ENCODE measurements at regions of chr7 and their contacts with region 1.

Region 1: GRCh38 chr7:45111298-45112223 is at the start of gene TBRG4:
- DNase-seq: peak; percentile 90 to 96 (median 92)
- H3K4me3 ChIP-seq: peak within 1 kb of the TSS; percentile 83
- H3K27ac ChIP-seq: peak within 1 kb of the TSS; percentile 63 to 90
- H3K4me1 ChIP-seq: peaks cover 6% of the 10 kb centered on the region
- H3K27me3 ChIP-seq: no peaks in the 10 kb centered on the region
- CTCF ChIP-seq: peak in 1 of 3 donors; percentile 39
- EP300 ChIP-seq: no peak
- POLR2A ChIP-seq: peak; percentile 98
- total RNA-seq, gene TBRG4: 28.9 to 67.5 (median 50.8) TPM

Region 2: DNA sequence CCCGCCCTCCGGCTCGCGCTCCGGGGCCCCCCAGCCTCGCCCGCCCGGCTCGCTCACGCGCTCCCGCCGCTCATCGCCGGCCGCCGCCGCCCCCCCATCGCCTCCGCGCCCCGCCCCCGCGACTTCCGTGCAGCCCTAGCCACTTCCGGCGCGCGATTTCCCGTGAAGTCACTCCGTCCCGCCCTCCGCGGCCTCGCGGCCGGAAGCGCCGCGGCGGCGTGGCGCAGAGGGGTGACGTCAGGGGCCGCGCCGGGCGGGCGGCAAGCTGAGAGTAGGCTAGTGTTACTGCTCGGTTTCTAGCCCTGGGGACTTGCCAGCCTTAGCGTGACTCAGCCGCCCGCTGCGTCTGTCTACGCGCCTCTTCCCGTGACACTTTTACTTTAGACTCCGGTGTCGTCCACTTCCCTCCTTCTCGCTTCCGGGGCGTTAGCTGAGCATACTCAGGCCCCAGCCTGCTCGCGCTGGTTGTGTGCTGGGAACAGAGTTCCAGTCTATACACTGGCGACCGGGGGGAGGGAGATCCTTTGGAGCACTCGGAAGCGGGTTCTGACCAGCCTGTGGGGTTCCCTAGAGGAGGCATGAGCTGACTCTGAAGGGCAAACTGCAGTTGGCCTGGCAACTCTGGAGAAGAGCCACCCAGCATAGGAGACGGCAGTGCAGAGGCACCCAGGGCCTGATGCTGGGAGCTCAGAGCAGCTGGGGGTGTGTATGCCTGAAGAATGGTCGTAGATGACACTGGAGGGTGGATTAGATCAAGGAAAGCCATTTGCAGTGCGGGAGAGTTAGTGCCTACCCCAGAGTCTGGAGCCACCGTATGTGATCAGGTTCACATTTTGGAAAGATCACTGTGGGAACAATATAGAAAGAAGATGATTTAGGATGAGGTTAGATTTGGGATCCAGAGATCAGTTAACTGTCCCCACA is 225.9 kb before region 1 on chr7 and contains the start of gene PURB:
- intact Hi-C with region 1: loop called in 1 of 4 experiments (anchors 10 kb)
- DNase-seq: peak; percentile 93 to 96 (median 95)
- H3K4me3 ChIP-seq: peak within 1 kb of the TSS; percentile 89
- H3K27ac ChIP-seq: peak within 1 kb of the TSS; percentile 74 to 97
- H3K4me1 ChIP-seq: peaks cover 14% of the 10 kb centered on the region
- H3K27me3 ChIP-seq: no peaks in the 10 kb centered on the region
- CTCF ChIP-seq: peak in 1 of 3 donors; percentile 36
- EP300 ChIP-seq: peak; percentile 8
- POLR2A ChIP-seq: peak; percentile 97
- total RNA-seq, gene PURB: 17.6 to 27.3 (median 25.6) TPM

Region 3: DNA sequence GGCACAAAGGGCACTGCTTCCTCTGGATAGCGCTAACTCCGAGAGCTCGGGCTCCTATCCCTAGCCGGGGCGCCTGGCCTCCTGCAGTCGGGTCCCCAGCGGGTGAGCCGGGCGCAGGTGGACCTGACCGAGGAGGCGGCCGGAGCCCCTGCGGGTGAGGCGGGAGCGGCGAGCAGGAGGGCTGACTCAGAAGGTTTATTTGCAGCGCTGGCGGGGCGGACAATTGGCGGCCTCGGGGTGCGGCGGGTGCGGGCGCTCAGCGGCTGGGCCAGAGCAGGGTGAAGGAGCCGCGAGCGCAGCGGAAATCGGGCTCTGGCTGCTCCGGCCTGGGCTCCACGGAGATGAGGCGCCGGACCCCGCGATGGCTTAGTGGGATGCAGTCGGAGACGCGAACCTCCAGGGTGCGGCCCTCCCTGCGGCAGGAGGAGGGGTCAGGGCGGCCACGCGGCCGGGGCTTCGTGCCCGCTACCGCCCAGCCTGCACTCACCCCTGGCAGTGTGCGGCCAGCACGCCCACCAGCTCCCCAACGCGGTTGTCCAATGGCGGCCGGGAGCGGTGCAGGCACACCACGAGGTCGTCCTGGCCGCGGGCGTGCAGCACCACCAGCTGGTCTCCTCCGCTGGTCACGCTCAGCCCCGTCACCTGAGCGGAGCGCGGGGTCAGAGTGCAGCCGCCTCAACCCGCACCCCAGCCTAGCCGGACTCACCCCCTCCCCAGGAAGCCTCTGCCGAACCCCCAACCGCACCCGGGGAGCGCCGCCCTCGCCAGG is 148.9 kb before region 1 on chr7:
- intact Hi-C with region 1: loop called in 1 of 4 experiments (anchors 10 kb)
- DNase-seq: peak in 4 of 5 donors; percentile 47 to 71 (median 63)
- H3K4me3 ChIP-seq: peak overlapping the region; percentile 19
- H3K27ac ChIP-seq: no peak overlapping the region
- H3K4me1 ChIP-seq: peaks cover 7% of the 10 kb centered on the region
- H3K27me3 ChIP-seq: no peaks in the 10 kb centered on the region
- CTCF ChIP-seq: no peak
- EP300 ChIP-seq: no peak
- POLR2A ChIP-seq: peak; percentile 5

Region 4: GRCh38 chr7:45026984-45027773 is 84.4 kb before region 1 on chr7:
- intact Hi-C with region 1: no loop called
- DNase-seq: no peak
- H3K4me3 ChIP-seq: no peak overlapping the region
- H3K27ac ChIP-seq: no peak overlapping the region
- H3K4me1 ChIP-seq: no peaks in the 10 kb centered on the region
- H3K27me3 ChIP-seq: no peaks in the 10 kb centered on the region
- CTCF ChIP-seq: no peak
- EP300 ChIP-seq: no peak
- POLR2A ChIP-seq: no peak

Region 5: DNA sequence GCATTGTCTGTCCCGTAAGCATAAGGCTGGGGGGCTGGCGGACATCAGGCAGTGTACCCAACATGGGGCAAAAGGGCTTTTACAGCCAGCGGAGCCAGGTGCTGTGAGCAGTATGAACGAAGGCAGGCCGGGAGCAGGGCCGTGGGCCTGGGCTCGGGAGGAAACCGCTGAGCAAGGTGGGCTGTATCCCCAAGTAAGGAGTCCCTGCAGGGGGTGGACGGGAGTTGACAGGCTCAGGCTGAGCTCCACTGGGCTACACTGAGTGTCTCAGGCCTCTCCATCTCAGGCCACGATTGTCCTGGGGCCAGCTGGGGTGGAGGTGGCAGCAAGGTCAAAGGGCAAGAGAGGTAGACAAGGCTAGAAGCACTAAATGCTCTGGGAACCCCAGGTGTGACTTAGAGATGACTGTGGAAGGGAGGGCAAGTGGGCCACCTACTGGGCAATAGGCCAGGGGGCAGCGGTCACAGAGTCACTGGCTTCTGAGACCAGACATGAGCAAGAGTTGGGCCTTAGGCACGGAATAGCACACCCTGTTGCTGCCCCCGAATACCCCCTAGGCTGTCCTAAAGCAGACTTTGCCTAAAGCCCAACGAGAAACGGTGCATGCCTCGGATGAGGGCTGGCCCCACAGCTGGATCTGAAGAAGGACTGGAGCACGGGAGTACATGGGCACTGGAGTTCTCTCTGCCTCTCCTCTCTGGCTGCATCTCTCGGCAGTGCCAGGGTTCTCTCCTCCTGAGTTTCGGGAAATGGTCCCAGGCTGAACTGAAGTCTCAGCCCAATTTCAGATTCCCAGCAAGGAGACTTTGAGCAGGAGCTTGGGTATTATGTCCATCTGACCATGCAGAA is 35.2 kb after region 1 on chr7:
- intact Hi-C with region 1: no loop called
- DNase-seq: no peak
- H3K4me3 ChIP-seq: no peak overlapping the region
- H3K27ac ChIP-seq: no peak overlapping the region
- H3K4me1 ChIP-seq: no peaks in the 10 kb centered on the region
- H3K27me3 ChIP-seq: no peaks in the 10 kb centered on the region
- CTCF ChIP-seq: no peak
- EP300 ChIP-seq: no peak
- POLR2A ChIP-seq: no peak

Region 6: GRCh38 chr7:45160417-45160881 is 48.9 kb after region 1 on chr7:
- intact Hi-C with region 1: no loop called
- DNase-seq: no peak
- H3K4me3 ChIP-seq: no peak overlapping the region
- H3K27ac ChIP-seq: no peak overlapping the region
- H3K4me1 ChIP-seq: no peaks in the 10 kb centered on the region
- H3K27me3 ChIP-seq: no peaks in the 10 kb centered on the region
- CTCF ChIP-seq: no peak
- EP300 ChIP-seq: no peak
- POLR2A ChIP-seq: no peak

Region 7: DNA sequence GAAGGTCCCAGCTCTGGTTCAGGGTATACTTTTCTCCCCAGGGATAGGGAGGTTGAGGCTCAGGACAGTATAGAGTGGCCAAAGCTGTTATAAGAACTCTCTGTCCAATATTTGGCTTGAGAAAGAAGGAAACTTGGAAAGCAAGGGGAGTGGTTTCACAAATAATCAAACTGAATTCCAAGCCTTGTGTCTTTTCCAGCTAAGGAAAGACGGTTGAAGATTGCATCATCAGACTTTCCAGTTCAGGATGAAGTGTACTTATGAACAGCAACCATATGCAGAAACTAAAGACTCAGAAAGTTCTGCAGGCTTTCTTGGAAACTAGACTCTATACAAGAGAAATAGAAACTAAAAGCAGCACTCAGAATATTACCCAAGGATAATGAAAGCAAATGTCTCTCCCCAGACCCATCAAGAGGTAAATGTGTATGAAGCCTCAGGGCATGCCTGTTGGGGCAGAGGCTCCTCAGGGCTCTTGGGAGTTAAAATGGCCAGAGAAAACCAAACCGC is 92.4 kb after region 1 on chr7:
- intact Hi-C with region 1: no loop called
- DNase-seq: no peak
- H3K4me3 ChIP-seq: no peak overlapping the region
- H3K27ac ChIP-seq: no peak overlapping the region
- H3K4me1 ChIP-seq: no peaks in the 10 kb centered on the region
- H3K27me3 ChIP-seq: no peaks in the 10 kb centered on the region
- CTCF ChIP-seq: no peak
- EP300 ChIP-seq: no peak
- POLR2A ChIP-seq: no peak

Measured in ovary (tissue), 10 donors.